ENCODE measurements at regions of chr16 and their contacts with region 1.

Region 1: DNA sequence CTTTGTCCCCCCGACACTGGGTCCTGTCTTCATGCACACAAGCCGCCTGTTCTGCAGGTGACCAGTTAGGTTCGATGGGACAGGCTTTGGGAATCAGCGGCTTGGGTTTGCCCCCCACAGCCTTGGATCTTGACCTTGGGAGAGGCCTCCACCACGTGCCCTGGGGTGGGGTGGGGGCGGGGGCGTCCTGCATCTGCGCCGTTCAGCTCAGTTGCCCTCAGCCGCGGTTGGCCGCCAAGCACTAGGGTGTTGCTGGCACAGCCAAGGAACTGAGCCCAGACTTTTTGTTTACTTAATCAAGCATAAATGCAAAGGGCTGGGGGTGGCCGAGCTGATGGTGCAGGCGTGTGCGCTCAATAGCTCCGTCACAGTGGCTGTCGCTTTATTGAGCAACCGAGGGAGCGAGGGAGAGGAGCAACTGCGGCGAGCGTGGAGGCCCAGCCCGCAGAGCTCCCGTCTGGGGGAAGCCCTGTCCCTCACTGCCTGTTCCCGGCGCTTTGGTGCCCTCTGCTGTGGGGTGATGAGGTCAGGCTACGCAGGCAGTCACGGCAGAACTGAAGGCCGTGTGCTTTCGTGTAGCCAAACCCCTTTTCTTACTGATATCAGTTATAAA is 33.9 kb downstream of the JPH3 start:
- DNase-seq: peak; percentile 89
- ATAC-seq: peak; percentile 97

Region 2: DNA sequence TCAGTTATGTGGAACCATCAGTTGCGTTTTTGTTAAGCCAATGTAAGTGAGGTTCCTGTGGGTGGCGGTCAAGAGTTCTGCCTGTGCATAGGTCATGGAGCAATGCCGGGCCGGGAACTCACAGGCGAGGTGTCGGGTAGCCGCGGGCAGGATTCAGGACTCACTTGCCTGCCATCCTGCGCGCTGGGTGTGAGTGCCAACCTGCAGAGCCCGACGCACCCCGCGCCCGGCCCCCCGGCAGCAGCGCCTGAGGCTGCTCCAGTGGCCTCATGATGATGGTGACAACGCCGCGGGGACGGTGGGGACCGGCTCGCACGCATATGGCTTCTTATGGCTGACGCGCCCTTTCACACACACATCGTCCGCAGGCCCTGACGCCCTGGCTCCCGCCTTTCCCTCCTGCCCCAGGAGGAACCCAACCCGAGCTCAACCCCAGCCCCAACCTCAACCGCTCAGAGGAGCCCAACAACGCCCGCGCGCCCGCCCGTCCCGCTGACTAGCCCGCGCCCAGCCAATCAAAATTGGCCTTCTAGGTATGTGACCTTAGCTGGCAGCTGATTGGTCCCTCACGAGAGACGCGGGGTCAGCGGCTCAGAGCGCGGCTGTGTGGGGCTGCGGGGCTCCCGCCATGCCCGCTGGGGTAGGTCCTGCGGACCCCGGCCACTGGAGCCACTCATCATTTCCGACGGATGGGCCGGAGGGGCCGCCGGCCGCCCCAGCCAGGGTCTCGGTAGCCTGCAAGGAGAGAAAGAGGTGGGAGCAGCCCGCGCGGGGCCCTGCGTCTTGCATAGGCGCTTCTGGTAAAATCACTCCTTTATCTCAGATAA is 319.0 kb before region 1 on chr16 and contains the start of gene C16orf95:
- intact Hi-C with region 1: loop called (anchors 10 kb)
- DNase-seq: peak; percentile 95
- ATAC-seq: peak; percentile 98
- total RNA-seq, gene C16orf95: 4.2 TPM

Region 3: DNA sequence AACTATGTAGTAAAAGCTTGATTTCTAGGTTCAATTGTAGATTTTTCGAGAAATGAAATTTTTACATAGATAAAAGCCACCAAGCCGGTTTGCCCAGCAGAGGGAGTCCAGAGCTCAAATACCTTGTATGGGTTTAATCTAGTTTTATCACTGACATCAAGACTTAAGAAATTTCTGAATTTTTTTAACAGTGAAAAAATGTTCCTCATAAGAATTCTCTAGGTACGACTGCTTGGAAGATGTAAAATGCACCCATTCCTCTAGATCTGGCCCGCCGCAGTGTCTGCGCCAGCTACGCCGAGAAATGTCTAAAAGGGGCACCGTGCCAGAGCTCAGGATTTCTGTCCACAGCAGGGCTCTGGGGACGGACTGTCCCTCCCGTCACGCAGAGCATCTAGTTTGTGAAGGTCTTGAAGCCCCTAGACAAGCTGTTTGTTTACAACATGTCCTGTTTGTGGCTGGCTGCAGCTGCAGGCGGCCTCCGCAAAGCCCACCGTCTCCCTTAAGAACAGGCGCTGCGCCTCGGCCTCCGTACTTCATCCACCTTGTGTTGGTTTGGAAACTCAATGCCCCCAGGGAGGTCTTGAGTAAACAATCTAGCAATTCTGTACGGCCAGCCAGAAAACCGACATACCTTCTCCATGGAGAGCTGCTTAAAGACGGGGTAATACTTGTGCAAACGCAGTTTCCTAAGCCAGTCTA is 219.2 kb before region 1 on chr16:
- intact Hi-C with region 1: loop called (anchors 5 kb)
- DNase-seq: peak; percentile 68
- ATAC-seq: no peak

Region 4: GRCh38 chr16:87461466-87461991 is 174.6 kb before region 1 on chr16:
- intact Hi-C with region 1: no loop called
- DNase-seq: no peak
- ATAC-seq: no peak

Region 5: DNA sequence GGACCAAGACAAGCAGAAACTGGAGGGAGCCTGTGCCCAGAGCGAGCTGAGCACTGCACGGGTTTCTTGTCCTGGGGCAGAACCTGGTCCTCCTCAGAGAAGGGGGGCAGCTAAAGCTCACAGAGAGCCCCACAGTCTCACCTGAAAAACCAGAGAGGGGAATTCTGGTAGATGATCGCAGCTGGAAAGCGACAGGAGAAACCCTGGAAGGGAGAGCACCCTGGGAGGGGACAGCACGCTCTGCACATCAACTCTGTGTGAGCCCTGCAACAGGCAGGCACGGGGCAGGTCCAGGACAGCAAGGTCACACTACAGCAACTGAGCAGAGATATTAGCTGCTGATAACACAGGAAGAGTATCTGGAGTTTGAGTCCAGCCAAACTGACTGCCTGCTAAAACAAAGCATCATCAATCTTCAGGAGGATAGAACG is 161.6 kb before region 1 on chr16:
- intact Hi-C with region 1: no loop called
- DNase-seq: no peak
- ATAC-seq: no peak

Region 6: DNA sequence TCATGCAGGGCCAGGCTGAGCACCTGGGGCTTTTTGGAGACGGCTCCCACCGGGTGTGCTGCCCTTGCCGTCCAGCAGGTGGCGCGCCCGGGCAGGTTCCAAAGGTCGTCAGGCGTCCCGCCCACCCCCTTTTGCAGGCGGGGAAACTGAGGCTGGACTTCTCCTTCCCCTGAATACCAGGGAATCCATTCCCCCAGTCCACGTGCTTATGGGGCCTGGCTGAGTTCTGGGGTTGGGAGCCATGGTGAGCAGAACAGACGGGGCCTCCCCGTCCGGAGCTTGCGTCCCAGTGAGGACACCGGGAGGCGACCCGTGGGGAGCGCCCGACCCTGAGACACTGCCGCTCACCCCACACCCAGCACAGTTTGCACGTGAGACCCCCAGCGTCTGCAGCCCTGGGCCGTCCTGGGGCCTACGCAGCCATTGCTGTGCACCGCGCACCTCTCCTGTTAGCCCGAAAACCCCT is 85.6 kb before region 1 on chr16:
- intact Hi-C with region 1: loop called (anchors 5 kb)
- DNase-seq: peak; percentile 83
- ATAC-seq: peak; percentile 58

Region 7: DNA sequence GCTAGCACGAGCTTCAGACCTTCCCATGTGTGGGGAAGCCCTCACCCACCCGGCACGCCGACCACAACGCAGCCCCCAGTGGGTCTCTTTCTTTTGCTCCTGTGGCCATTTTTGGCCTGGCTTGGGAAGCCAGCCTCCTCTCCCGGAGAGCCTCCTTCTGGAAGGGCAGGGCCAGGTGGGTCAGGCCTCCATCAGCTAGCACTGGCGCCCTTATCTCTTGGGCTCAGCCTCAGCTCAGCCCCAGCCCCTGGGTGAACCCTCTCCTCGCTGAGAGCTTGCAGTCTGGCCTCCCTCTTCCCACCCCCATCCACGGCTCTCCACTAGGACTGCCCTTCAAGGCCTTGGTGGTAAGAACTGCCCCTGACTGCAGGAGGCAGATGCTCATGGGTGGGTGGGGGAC is 48.5 kb before region 1 on chr16:
- intact Hi-C with region 1: loop called (anchors 2 kb)
- DNase-seq: peak; percentile 37
- ATAC-seq: no peak